ENCODE measurements at regions of chr15 and their contacts with region 1.

Region 1: GRCh38 chr15:63157118-63157843 is at the start of gene RPS27L:
- DNase-seq: peak; percentile 90 to 93
- ATAC-seq: peak; percentile 96 to 99 (median 98)
- H3K4me3 ChIP-seq: peak within 1 kb of the TSS; percentile 56 to 99 (median 82)
- H3K27ac ChIP-seq: peak within 1 kb of the TSS; percentile 87 to 99 (median 97)
- H3K4me1 ChIP-seq: peaks cover 5 to 37% (median 26%) of the 10 kb centered on the region in 9 donors
- H3K27me3 ChIP-seq: no peaks in the 10 kb centered on the region
- CTCF ChIP-seq: no peak
- total RNA-seq, gene RPS27L: 117 to 177 (median 145) TPM

Region 2: GRCh38 chr15:63122002-63122893 is 35.0 kb before region 1 on chr15:
- intact Hi-C with region 1: loop called in 1 of 10 experiments (anchors 5 kb)
- DNase-seq: peak; percentile 81 to 84
- ATAC-seq: peak; percentile 95 to 98 (median 98)
- H3K4me3 ChIP-seq: peak overlapping the region; percentile 91 to 100 (median 97)
- H3K27ac ChIP-seq: peak overlapping the region; percentile 94 to 98 (median 96)
- H3K4me1 ChIP-seq: peaks cover 0 to 13% (median 8%) of the 10 kb centered on the region in 9 donors
- H3K27me3 ChIP-seq: no peaks in the 10 kb centered on the region
- CTCF ChIP-seq: peak in 6 of 9 donors; percentile 24 to 53 (median 38)

Region 3: GRCh38 chr15:63221346-63221745 is 64.1 kb after region 1 on chr15:
- intact Hi-C with region 1: no loop called
- DNase-seq: peak in 1 of 2 donors; percentile 59
- ATAC-seq: peak; percentile 74 to 87 (median 80)
- H3K4me3 ChIP-seq: no peak overlapping the region
- H3K27ac ChIP-seq: peak overlapping the region in 4 of 10 donors; percentile 18 to 70 (median 38)
- H3K4me1 ChIP-seq: peaks cover 10 to 75% (median 27%) of the 10 kb centered on the region in 9 donors
- H3K27me3 ChIP-seq: no peaks in the 10 kb centered on the region
- CTCF ChIP-seq: no peak

Measured in heart right ventricle (tissue), 16 donors.